Left cardiac atrium (tissue), 4 donors: ENCODE measurements at regions of chr1 and their contacts with region 1.

Region 1: DNA sequence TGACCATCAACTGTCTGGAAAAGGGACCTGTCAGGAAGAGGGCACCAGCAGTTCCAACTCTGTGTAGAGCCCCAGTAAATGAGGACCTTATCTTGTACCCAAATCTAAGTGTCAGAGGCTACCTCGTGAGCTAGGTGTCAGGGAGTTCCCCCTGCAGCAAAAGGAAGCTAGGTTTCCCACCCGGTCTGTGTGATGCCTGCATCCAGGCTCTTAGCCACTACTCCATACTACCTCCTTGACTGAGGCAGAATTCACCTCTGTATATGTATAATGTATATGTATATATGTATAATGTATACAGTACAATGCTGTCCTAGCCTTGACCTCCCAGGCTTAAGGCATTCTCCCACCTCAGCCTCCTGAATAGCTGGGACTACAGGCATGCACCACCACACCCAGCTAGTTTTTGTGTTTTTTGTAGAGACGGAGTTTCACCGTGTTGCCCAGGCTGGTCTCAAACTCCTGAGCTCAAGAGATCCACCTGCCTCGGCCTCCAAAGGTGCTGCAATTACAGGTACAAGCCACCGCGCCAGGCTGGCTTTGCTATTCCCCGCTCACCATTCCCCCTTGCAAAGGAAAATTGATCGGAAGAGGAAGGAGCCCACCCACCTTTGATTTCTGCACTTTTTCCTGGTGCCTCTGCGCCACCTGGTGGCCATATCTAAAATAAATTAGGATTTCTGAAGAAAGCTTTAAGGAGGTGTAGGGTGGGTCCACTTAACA is 15.7 kb upstream of the LUZP1 start:
- DNase-seq: peak; percentile 25
- ATAC-seq: peak; percentile 53 to 63

Region 2: DNA sequence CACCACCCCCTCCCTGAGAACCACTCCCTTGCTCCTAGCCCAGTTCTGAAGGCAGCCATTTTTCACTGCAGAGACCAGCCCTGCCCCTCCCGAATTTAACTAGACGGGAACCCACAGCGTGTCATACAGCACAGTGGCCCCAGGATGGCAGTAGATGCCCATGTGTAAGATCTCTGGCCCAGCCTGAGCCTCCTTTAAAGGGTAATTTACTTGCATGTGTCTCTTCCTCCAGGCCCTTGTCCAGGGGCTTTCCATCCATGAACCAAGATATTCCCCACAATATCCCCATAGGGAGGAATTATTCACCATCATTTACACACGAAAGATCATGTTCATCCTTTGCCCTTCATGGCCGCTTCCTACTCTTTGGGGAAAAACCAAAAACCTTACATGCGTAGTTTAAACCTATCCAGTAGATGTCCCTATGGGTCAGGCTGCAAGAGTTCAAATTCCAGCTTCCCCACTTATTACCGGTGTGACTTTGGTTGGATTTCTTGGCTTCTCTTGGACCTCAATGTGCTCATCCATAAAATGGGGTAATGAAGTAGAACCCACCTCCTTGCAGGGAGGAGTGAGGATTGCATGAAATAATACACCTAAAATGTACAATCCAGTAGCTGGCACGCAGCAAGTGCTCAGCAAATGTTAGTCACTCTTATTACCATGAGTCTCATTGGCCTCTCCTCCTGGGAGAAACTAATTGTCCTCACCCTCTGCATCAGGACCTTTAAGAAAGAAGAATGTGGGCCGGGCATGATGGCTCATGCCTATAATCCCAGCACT is 207.7 kb before region 1 on chr1:
- intact Hi-C with region 1: loop called (anchors 5 kb)
- DNase-seq: peak; percentile 58
- ATAC-seq: peak; percentile 96 to 98

Region 3: GRCh38 chr1:23098463-23099170 is 85.8 kb before region 1 on chr1:
- intact Hi-C with region 1: loop called (anchors 2 kb)
- DNase-seq: peak; percentile 39
- ATAC-seq: peak; percentile 55 to 74

Region 4: GRCh38 chr1:23384302-23385058 is 200.1 kb after region 1 on chr1:
- intact Hi-C with region 1: no loop called
- DNase-seq: no peak
- ATAC-seq: peak in 1 of 2 donors; percentile 26